Calu3 (cell line): ENCODE measurements at regions of chr7 and their contacts with region 1.

Region 1: GRCh38 chr7:152894273-152895170 is 135.0 kb downstream of the ACTR3B start:
- DNase-seq: peak; percentile 43
- H3K4me3 Mint-ChIP-seq: no peak overlapping the region
- H3K27ac Mint-ChIP-seq: no peak overlapping the region
- H3K4me1 Mint-ChIP-seq: no peaks in the 10 kb centered on the region
- H3K27me3 Mint-ChIP-seq: peaks cover 26% of the 10 kb centered on the region
- CTCF ChIP-seq: peak; percentile 73

Region 2: GRCh38 chr7:152910545-152911225 is 16.2 kb after region 1 on chr7:
- CTCF ChIA-PET with region 1: no interaction called
- intact Hi-C with region 1: no loop called
- DNase-seq: no peak
- H3K4me3 Mint-ChIP-seq: no peak overlapping the region
- H3K27ac Mint-ChIP-seq: no peak overlapping the region
- H3K4me1 Mint-ChIP-seq: no peaks in the 10 kb centered on the region
- H3K27me3 Mint-ChIP-seq: no peaks in the 10 kb centered on the region
- CTCF ChIP-seq: no peak

Region 3: GRCh38 chr7:152998420-152998819 is 103.9 kb after region 1 on chr7:
- CTCF ChIA-PET with region 1: no interaction called
- intact Hi-C with region 1: no loop called
- DNase-seq: no peak
- H3K4me3 Mint-ChIP-seq: no peak overlapping the region
- H3K27ac Mint-ChIP-seq: no peak overlapping the region
- H3K4me1 Mint-ChIP-seq: no peaks in the 10 kb centered on the region
- H3K27me3 Mint-ChIP-seq: no peaks in the 10 kb centered on the region
- CTCF ChIP-seq: no peak

Region 4: DNA sequence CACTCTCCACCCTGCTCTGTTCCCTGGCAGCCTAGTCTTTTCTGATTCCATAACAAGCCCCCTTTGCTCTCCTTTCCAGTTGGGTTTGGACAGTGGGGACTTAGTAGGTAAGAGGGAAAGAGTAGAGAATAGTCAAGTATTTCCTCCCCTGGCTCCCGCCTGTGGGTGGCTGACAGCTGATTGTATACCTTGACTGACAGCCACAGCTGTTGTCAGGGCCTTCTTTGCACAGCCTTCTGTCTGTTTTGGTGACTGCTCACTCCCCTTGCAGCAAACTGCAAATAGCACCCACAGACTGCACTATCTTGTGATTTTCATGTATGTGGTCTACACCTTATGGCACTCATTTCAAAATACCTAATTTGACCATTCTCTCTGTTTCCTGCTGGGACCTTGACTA is 351.3 kb after region 1 on chr7:
- CTCF ChIA-PET with region 1: no interaction called
- intact Hi-C with region 1: no loop called
- DNase-seq: no peak
- H3K4me3 Mint-ChIP-seq: no peak overlapping the region
- H3K27ac Mint-ChIP-seq: no peak overlapping the region
- H3K4me1 Mint-ChIP-seq: no peaks in the 10 kb centered on the region
- H3K27me3 Mint-ChIP-seq: no peaks in the 10 kb centered on the region
- CTCF ChIP-seq: no peak

Region 5: GRCh38 chr7:154503962-154504550 is 1609.5 kb after region 1 on chr7:
- CTCF ChIA-PET with region 1: no interaction called
- intact Hi-C with region 1: loop called (anchors 5 kb)
- DNase-seq: no peak
- H3K4me3 Mint-ChIP-seq: no peak overlapping the region
- H3K27ac Mint-ChIP-seq: no peak overlapping the region
- H3K4me1 Mint-ChIP-seq: no peaks in the 10 kb centered on the region
- H3K27me3 Mint-ChIP-seq: no peaks in the 10 kb centered on the region
- CTCF ChIP-seq: peak; percentile 18